MCF 10A (cell line): ENCODE measurements at regions of chr22 and their contacts with region 1.

Region 1: DNA sequence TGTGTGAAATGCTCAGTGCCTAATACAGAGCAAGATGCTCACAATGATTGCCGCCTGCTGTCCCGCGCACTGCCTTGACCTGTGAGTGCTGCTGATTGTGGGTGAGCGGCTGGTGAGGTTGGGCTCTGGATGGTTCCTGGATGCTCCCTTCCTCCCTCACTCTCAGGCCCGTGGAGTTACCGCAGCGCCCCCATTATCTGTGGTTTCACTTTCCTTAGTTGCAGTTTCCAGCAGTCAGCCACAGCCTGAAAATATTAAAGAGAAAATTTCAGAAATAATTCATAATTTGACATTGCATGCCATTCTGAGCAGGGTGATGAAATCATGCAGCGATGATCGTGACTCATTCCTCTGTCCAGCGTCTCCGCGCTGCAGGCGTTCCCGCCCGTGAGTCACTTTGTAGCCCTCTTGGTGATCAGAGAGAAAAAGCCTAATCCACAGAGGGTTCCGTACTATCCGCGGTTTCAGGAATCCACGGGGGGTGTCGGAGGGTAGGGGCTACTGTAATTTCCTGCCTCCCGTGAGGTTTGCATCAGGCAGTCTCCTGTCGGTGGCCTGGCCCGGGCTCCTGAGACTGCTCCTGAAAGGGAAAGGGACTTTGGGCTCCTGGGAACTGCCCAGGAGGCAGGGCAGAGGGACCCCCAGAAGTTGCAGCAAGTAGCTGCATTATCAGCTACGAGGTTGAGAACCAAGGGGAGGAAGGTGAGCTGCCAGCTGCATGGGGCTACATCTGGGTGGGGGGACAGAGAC is 10.6 kb downstream of the RPL3 start:
- DNase-seq: peak; percentile 93
- H3K4me3 Mint-ChIP-seq: peak overlapping the region; percentile 62
- H3K27ac Mint-ChIP-seq: peak overlapping the region; percentile 59
- H3K4me1 Mint-ChIP-seq: peaks cover 30% of the 10 kb centered on the region
- H3K27me3 Mint-ChIP-seq: no peaks in the 10 kb centered on the region
- CTCF ChIP-seq: no peak

Region 2: GRCh38 chr22:39135090-39135896 is 173.5 kb before region 1 on chr22:
- CTCF ChIA-PET with region 1: interaction called, 3 read pairs
- POLR2A ChIA-PET with region 1: no interaction called
- intact Hi-C with region 1: loop called (anchors 1 kb)
- DNase-seq: peak; percentile 69
- H3K4me3 Mint-ChIP-seq: no peak overlapping the region
- H3K27ac Mint-ChIP-seq: no peak overlapping the region
- H3K4me1 Mint-ChIP-seq: peaks cover 6% of the 10 kb centered on the region
- H3K27me3 Mint-ChIP-seq: no peaks in the 10 kb centered on the region
- CTCF ChIP-seq: peak; percentile 43

Region 3: GRCh38 chr22:39170825-39171622 is 137.8 kb before region 1 on chr22:
- CTCF ChIA-PET with region 1: interaction called, 256 read pairs
- POLR2A ChIA-PET with region 1: interaction called, 53 read pairs
- intact Hi-C with region 1: loop called (anchors 1 kb)
- DNase-seq: peak; percentile 76
- H3K4me3 Mint-ChIP-seq: no peak overlapping the region
- H3K27ac Mint-ChIP-seq: no peak overlapping the region
- H3K4me1 Mint-ChIP-seq: peaks cover 36% of the 10 kb centered on the region
- H3K27me3 Mint-ChIP-seq: no peaks in the 10 kb centered on the region
- CTCF ChIP-seq: peak; percentile 96

Region 4: GRCh38 chr22:39240828-39241793 is 67.7 kb before region 1 on chr22:
- CTCF ChIA-PET with region 1: interaction called, 5 read pairs
- POLR2A ChIA-PET with region 1: interaction called, 18 read pairs
- intact Hi-C with region 1: no loop called
- DNase-seq: no peak
- H3K4me3 Mint-ChIP-seq: peak overlapping the region; percentile 45
- H3K27ac Mint-ChIP-seq: no peak overlapping the region
- H3K4me1 Mint-ChIP-seq: peaks cover 37% of the 10 kb centered on the region
- H3K27me3 Mint-ChIP-seq: peaks cover 34% of the 10 kb centered on the region
- CTCF ChIP-seq: no peak

Region 5: DNA sequence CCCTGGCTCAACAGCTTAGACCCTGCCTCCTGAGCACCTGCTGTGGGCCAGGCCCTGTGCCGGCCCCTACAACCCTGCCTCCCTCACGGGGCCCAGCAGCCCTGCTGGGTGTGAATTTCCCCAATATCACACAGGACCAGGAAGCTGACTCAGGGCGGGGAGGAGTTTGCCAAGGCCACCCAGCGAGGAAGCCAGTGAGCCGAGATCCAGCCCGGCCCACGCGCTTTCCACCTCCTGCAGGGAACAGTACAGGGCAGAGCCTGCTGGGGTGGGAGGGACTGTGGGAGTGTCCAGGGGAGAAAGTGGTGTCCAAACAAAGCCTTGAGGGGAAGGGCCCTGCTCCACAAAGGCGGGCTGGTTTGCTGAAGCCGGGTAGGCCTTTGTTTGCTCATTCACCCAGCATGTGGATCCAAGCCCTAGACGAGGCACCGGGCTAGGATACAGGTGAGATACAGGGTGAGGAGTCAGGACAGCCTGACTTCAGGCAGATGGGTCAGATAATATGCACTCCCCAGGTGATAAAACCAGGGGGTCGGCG is 16.2 kb before region 1 on chr22:
- CTCF ChIA-PET with region 1: interaction called, 3 read pairs
- POLR2A ChIA-PET with region 1: interaction called, 10 read pairs
- intact Hi-C with region 1: no loop called
- DNase-seq: peak; percentile 96
- H3K4me3 Mint-ChIP-seq: peak overlapping the region; percentile 38
- H3K27ac Mint-ChIP-seq: peak overlapping the region; percentile 75
- H3K4me1 Mint-ChIP-seq: peaks cover 15% of the 10 kb centered on the region
- H3K27me3 Mint-ChIP-seq: no peaks in the 10 kb centered on the region
- CTCF ChIP-seq: no peak